ENCODE measurements at regions of chr6 and their contacts with region 1.

Region 1: GRCh38 chr6:43228951-43229802 is at the start of gene DNPH1:
- DNase-seq: peak; percentile 36 to 94
- H3K4me3 ChIP-seq: peak within 1 kb of the TSS; percentile 56 to 74 (median 58)
- H3K27ac ChIP-seq: no peak within 1 kb of the TSS
- H3K4me1 ChIP-seq: peaks cover 0 to 4% (median 4%) of the 10 kb centered on the region in 4 experiments; a peak in 4 of 7 replicates
- H3K27me3 ChIP-seq: peaks cover 3 to 22% (median 17%) of the 10 kb centered on the region in 4 experiments
- CTCF ChIP-seq: peak in 2 of 3 experiments; percentile 81 to 83; a peak in 3 of 4 replicates
- EP300 ChIP-seq: peak in 1 of 2 experiments; percentile 31; a peak in 1 of 3 replicates
- POLR2A ChIP-seq: peak in 1 of 2 experiments; percentile 84; a peak in 2 of 3 replicates
- RAD21 ChIP-seq: peak; percentile 41 to 64
- total RNA-seq, gene DNPH1: 33.9 and 37.2 TPM in 2 replicates

Region 2: DNA sequence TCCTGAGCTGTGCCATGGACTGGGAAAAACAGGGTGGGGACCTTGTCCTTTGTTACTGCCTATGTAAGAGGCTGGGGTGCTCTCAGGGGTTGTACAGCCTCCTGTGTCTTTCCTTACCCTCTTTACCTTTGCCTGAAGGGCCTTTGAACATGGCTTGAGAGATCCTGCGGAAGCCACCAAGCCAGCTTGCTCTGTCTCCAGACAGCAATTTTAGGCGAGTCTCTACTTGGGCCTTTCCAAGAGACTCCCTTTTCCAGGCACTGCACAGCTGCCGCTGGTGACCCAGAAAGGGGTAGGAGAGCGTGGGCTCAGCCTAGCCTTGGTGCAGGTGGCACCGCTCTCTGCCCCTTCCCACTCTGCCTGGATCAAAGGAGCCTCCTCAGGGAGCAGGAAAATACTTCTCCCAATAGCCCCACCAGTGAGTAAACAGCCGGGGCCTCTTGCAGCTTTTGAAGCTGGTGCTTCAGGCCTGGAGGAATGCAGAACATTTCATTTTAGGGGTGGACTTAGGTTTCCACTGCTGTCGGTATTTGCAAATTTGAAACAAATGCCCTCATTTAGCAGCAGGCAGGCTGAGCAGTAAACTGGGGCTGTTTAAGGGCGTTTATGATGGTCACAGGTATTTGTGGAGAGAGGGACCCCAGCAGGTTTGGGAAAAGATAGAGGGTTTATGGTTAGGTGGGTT is 139.2 kb before region 1 on chr6:
- CTCF ChIA-PET with region 1: no interaction called
- POLR2A ChIA-PET with region 1: no interaction called
- DNase-seq: peak in 1 of 2 experiments; percentile 57
- H3K4me3 ChIP-seq: peak overlapping the region; percentile 19 to 46 (median 31); a peak in 7 of 8 replicates
- H3K27ac ChIP-seq: peak overlapping the region; percentile 81
- H3K4me1 ChIP-seq: peaks cover 18 to 33% (median 26%) of the 10 kb centered on the region in 4 experiments
- H3K27me3 ChIP-seq: no peaks in the 10 kb centered on the region
- CTCF ChIP-seq: no peak
- EP300 ChIP-seq: no peak
- POLR2A ChIP-seq: no peak
- RAD21 ChIP-seq: no peak

Region 3: DNA sequence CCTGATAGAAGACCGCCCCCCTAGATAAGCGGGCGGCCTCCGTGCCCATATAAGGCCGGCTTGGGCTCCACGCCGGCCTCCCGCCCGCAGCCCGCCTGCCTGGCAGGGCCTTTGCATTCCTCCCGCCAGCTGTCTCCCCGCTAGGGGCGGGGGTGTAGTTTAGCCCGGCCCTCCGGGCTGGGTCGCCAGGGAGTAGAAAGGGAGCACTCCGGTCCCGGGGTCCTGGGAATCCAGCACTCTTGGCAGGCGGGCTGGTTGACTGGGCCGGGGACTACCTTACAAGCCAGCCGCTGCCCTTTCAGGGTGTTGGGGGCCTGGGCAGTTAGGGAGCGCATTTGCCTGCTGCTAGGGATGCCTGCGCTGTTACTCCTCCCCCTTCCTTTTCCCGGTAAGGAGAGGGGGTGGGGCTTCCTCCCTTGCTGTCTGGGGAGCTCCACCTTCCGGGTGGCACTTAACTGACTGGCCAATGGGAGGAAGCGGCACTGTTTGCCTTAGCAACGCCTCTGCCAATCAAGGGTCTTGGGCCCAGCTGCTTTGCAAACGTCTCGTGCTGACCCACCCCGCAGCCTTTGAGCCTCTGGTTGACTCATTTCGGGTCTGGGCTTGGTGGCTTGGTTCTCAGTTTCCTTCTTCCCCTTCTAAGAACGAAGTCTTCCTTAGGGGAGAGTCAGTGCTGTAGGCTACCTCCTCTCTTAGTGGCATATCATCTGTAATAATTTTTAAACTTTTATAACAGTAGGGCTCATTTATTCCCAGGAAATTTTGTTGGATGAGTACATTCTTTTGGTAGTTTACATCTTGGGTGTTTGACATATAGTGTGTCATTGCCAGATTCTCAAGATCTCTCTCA is 54.7 kb before region 1 on chr6:
- CTCF ChIA-PET with region 1: interaction called, 3 read pairs
- POLR2A ChIA-PET with region 1: interaction called, 13 read pairs
- DNase-seq: peak; percentile 90 to 95
- H3K4me3 ChIP-seq: peak overlapping the region; percentile 27 to 86 (median 38)
- H3K27ac ChIP-seq: peak overlapping the region; percentile 77; the same call in 1 of the 2 replicates
- H3K4me1 ChIP-seq: peaks cover 9 to 17% (median 11%) of the 10 kb centered on the region in 4 experiments
- H3K27me3 ChIP-seq: peaks cover 0 to 6% (median 2%) of the 10 kb centered on the region in 4 experiments; a peak in 3 of 7 replicates
- CTCF ChIP-seq: no peak; a peak in 1 of 4 replicates
- EP300 ChIP-seq: no peak; a peak in 1 of 3 replicates
- POLR2A ChIP-seq: peak in 1 of 2 experiments; percentile 59; a peak in 2 of 3 replicates
- RAD21 ChIP-seq: peak in 1 of 2 experiments; percentile 11; a peak in 1 of 4 replicates

Region 4: GRCh38 chr6:43211955-43212354 is 17.2 kb before region 1 on chr6:
- CTCF ChIA-PET with region 1: interaction called, 33 read pairs
- POLR2A ChIA-PET with region 1: interaction called, 16 read pairs
- DNase-seq: no peak
- H3K4me3 ChIP-seq: no peak overlapping the region
- H3K27ac ChIP-seq: no peak overlapping the region
- H3K4me1 ChIP-seq: no peaks in the 10 kb centered on the region; a peak in 1 of 7 replicates
- H3K27me3 ChIP-seq: no peaks in the 10 kb centered on the region
- CTCF ChIP-seq: peak in 1 of 3 experiments; percentile 43; a peak in 1 of 4 replicates
- EP300 ChIP-seq: no peak
- POLR2A ChIP-seq: no peak
- RAD21 ChIP-seq: peak; percentile 27 to 42; a peak in 2 of 4 replicates

Region 5: GRCh38 chr6:43242908-43243663 is 13.9 kb after region 1 on chr6 and contains the start of gene TTBK1:
- CTCF ChIA-PET with region 1: interaction called, 22 read pairs
- POLR2A ChIA-PET with region 1: interaction called, 5 read pairs
- DNase-seq: peak in 1 of 2 experiments; percentile 83
- H3K4me3 ChIP-seq: peak within 1 kb of the TSS; percentile 12 to 46 (median 30)
- H3K27ac ChIP-seq: no peak within 1 kb of the TSS
- H3K4me1 ChIP-seq: peaks cover 2 to 8% (median 5%) of the 10 kb centered on the region in 4 experiments
- H3K27me3 ChIP-seq: peaks cover 13 to 51% (median 43%) of the 10 kb centered on the region in 4 experiments
- CTCF ChIP-seq: no peak
- EP300 ChIP-seq: no peak
- POLR2A ChIP-seq: no peak
- RAD21 ChIP-seq: no peak
- total RNA-seq, gene TTBK1: 1.5 and 1.6 TPM in 2 replicates

Region 6: DNA sequence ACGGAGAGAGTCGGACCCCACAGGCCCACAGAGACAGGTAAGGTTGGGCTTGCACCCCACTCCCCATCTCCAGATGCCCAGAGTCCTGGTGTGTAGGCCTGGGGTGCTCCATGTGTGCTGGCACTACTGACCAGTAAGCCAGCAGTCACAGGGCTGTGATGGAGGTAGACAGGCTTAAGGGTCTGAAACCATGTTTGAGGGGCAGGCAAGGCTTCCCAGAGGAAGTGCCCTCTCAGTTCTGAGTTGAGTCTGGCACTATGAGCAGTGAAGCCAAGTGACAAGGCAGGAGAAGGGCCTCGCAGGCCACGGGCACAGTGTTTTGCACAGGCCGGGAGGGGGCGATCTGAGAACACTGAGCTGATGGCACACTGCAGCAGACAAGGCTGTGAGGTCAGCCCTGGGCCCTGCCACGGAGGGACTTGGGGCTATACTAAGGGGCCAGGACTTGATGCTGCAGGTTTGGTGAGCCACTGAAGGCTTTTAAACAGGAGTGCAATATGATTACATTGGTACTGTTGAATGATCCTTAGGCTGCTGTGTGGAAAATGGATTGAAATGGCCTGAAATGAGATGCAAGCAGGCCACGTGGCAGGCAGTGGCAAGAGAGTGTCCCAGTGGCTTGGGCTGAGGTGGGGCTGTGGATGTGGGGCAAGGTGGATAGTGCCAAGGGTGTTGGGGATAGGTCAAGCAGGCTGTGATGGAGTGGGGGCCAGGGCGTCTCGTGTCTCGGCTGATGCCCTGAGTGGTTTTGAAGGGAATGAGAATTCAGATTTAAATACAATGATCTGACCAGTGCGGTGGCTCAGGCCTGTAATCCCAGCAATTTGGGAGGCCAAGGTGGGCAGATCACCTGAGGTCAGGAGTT is 34.4 kb after region 1 on chr6:
- CTCF ChIA-PET with region 1: interaction called, 25 read pairs
- POLR2A ChIA-PET with region 1: no interaction called
- DNase-seq: peak; percentile 49 to 90
- H3K4me3 ChIP-seq: no peak overlapping the region
- H3K27ac ChIP-seq: no peak overlapping the region
- H3K4me1 ChIP-seq: peaks cover 0 to 15% (median 5%) of the 10 kb centered on the region in 4 experiments; a peak in 6 of 7 replicates
- H3K27me3 ChIP-seq: peaks cover 2 to 9% (median 7%) of the 10 kb centered on the region in 4 experiments
- CTCF ChIP-seq: peak in 2 of 3 experiments; percentile 91 to 98; a peak in 3 of 4 replicates
- EP300 ChIP-seq: no peak
- POLR2A ChIP-seq: no peak
- RAD21 ChIP-seq: peak; percentile 96 to 97

Measured in H1 (cell line).